ENCODE measurements at regions of chr7 and their contacts with region 1.

Region 1: DNA sequence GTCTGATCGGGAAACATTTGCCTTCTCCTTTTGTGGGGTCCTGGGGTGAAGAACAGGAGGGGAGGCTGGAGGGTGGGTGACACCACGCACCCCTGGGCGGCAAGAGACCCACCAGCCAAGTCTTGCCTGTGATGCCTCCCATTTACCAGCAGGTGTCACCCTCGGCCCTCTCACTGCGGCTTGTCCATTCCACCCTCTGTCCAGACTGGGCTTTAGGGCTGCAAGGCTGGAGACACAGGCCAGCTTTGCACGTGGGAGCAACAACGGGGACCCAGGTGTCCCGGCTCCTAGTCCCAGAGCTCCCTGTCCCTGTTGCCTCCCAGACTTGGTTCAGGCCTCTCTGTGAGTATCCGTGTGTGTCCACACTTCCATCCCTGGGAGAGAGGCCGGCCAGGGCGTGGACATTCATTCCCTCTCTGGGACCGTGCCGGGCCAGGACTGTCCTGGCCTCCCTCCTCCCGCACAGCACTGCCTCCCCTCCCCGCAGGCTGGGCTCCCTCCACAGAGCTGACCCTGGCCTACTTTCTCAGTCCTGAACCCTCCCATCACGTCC is 36.2 kb upstream of the GTF2IRD1 start:
- DNase-seq: peak; percentile 44
- ATAC-seq: peak; percentile 98
- H3K4me3 ChIP-seq: no peak overlapping the region
- H3K27ac ChIP-seq: no peak overlapping the region
- H3K4me1 ChIP-seq: peaks cover 2 to 13% of the 10 kb centered on the region in 2 experiments; a peak in 2 of 4 replicates
- H3K27me3 ChIP-seq: no peaks in the 10 kb centered on the region
- CTCF ChIP-seq: peak; percentile 87 to 96 (median 96)
- POLR2A ChIP-seq: no peak
- RAD21 ChIP-seq: peak; percentile 99

Region 2: DNA sequence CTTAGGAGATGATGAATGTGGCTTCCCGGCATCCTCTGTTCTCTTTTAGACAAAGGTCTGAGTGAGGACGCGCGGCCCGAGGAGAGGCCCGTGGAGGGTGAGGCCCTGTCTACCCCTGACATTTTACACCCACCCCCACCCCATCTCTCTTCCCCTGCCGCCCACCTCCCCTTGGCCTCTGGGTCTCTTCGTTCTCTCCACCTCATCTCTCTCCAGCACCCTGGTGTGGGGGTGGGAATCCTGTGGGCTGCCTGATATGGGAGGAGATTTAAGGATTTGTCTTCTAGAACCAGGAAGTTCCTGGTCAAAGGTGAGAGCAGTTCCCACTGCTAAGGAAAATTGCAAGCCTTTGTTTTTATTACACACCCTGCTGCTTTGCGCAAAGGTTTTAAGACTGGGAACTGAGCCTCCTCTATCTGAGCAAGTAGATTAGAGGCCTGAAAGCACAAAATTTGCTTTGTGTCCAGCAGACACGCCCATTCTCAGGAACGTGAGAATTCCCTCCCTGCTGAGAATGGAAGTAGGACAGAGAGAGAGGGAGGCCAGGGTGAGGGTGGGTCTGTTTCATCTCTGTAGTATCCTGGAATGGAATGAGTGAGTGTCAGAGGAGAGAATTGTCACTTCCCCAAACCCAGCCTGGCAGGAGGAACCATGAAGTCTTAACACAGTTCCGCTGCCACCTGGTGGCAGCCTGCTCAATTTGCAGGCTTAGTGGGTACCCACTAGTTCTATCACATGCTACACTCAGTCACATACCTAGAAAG is 127.4 kb after region 1 on chr7:
- CTCF ChIA-PET with region 1: no interaction called
- POLR2A ChIA-PET with region 1: no interaction called
- RAD21 ChIA-PET with region 1: no interaction called
- intact Hi-C with region 1: loop called (anchors 2 kb)
- DNase-seq: peak; percentile 34
- ATAC-seq: peak; percentile 89
- H3K4me3 ChIP-seq: no peak overlapping the region
- H3K27ac ChIP-seq: no peak overlapping the region
- H3K4me1 ChIP-seq: no peaks in the 10 kb centered on the region
- H3K27me3 ChIP-seq: no peaks in the 10 kb centered on the region
- CTCF ChIP-seq: peak; percentile 42 to 77 (median 75); a peak in 5 of 6 replicates
- POLR2A ChIP-seq: no peak
- RAD21 ChIP-seq: peak; percentile 67

Region 3: GRCh38 chr7:74567318-74567668 is 149.8 kb after region 1 on chr7:
- CTCF ChIA-PET with region 1: interaction called, 16 read pairs
- POLR2A ChIA-PET with region 1: no interaction called
- RAD21 ChIA-PET with region 1: interaction called in 1 of 2 experiments, 6 read pairs
- intact Hi-C with region 1: loop called (anchors 2 kb)
- DNase-seq: no peak
- ATAC-seq: no peak
- H3K4me3 ChIP-seq: no peak overlapping the region
- H3K27ac ChIP-seq: no peak overlapping the region
- H3K4me1 ChIP-seq: peaks cover 6 to 11% of the 10 kb centered on the region in 2 experiments; a peak in 2 of 4 replicates
- H3K27me3 ChIP-seq: no peaks in the 10 kb centered on the region
- CTCF ChIP-seq: no peak
- POLR2A ChIP-seq: no peak
- RAD21 ChIP-seq: no peak

Region 4: GRCh38 chr7:75045881-75046280 is 628.4 kb after region 1 on chr7:
- CTCF ChIA-PET with region 1: no interaction called
- POLR2A ChIA-PET with region 1: no interaction called
- RAD21 ChIA-PET with region 1: no interaction called
- intact Hi-C with region 1: loop called (anchors 2 kb)
- DNase-seq: no peak
- ATAC-seq: 0 out of 2 replicates have a peak, but pooled peaks have one; percentile 9
- H3K4me3 ChIP-seq: no peak overlapping the region
- H3K27ac ChIP-seq: no peak overlapping the region
- H3K4me1 ChIP-seq: no peaks in the 10 kb centered on the region
- H3K27me3 ChIP-seq: no peaks in the 10 kb centered on the region
- CTCF ChIP-seq: no peak
- POLR2A ChIP-seq: no peak
- RAD21 ChIP-seq: no peak